Panc1 (cell line): ENCODE measurements at regions of chr1 and their contacts with region 1.

Region 1: GRCh38 chr1:197715806-197716205 is 59.5 kb downstream of the DENND1B start:
- DNase-seq: no peak
- ATAC-seq: no peak
- H3K4me3 ChIP-seq: no peak overlapping the region
- H3K27ac ChIP-seq: no peak overlapping the region
- H3K4me1 ChIP-seq: no peaks in the 10 kb centered on the region
- H3K27me3 ChIP-seq: no peaks in the 10 kb centered on the region
- CTCF ChIP-seq: no peak

Region 2: DNA sequence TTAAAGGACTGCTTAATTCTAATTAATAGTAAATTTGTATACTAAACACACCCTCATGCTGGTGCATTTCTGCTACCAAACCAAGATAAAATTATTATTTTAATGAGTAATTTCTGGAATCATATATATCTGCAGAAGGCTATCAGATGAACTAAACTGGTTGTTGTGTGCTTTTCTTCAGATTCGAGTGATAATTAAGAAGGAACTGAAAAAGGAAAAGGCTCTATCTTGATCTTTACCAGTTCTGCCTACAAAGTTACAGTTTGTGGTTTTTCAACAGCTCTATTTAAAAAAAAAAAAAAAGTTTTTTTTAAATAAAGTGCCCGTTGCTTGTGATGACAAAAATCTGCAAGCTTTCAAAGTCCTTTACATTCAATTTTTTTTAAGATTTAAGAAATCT is 45.8 kb after region 1 on chr1:
- CTCF ChIA-PET with region 1: no interaction called
- POLR2A ChIA-PET with region 1: interaction called, 11 read pairs
- in situ Hi-C with region 1: no loop called
- intact Hi-C with region 1: no loop called
- DNase-seq: no peak
- ATAC-seq: no peak
- H3K4me3 ChIP-seq: no peak overlapping the region
- H3K27ac ChIP-seq: no peak overlapping the region
- H3K4me1 ChIP-seq: peaks cover 7% of the 10 kb centered on the region
- H3K27me3 ChIP-seq: no peaks in the 10 kb centered on the region
- CTCF ChIP-seq: no peak